PC-3 (cell line): ENCODE measurements at regions of chr19 and their contacts with region 1.

Region 1: GRCh38 chr19:42794765-42795164 is 29.3 kb upstream of the PSG8 start:
- DNase-seq: no peak
- ATAC-seq: no peak
- H3K4me3 ChIP-seq: no peak overlapping the region
- H3K27ac ChIP-seq: no peak overlapping the region
- H3K4me1 ChIP-seq: peaks cover 13% of the 10 kb centered on the region
- H3K27me3 ChIP-seq: no peaks in the 10 kb centered on the region
- CTCF ChIP-seq: no peak

Region 2: DNA sequence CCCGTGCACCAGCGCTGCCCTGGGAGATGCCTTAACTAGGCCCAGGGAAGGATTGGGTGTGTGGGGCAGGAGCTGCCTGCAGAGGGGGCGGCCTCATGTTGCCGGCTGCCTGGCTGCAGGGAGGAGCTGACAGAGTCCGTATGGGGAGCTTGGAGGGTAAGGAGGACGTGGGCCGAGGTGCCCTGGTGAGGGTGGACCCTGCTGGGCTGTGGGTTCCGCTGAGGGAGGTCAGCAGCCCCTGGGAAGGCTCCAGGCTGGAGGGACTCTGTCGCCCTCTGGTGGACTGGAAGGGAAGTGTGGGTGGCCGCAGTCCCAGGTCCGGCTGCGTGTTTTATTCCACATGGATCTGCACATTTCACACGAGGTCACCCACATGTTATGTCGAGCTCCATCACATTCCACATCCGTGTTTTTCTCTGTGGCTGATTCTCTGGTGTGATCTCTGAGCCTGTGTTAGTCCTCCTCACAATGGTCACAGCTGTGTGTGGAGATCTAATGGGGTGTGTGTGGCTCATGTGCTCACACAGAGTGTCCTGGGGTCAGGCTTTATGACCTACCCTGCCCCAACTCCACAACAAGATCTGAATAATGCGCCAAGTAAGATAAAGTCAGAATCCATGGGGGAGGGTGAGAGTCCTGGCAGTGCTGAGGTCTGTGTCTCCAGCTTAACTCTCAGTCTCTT is 198.2 kb before region 1 on chr19:
- CTCF ChIA-PET with region 1: no interaction called
- POLR2A ChIA-PET with region 1: no interaction called
- intact Hi-C with region 1: no loop called
- DNase-seq: peak; percentile 24
- ATAC-seq: peak; percentile 48
- H3K4me3 ChIP-seq: no peak overlapping the region
- H3K27ac ChIP-seq: no peak overlapping the region
- H3K4me1 ChIP-seq: no peaks in the 10 kb centered on the region
- H3K27me3 ChIP-seq: peaks cover under 1% of the 10 kb centered on the region; the same call in 1 of the 2 replicates
- CTCF ChIP-seq: peak; percentile 81

Region 3: DNA sequence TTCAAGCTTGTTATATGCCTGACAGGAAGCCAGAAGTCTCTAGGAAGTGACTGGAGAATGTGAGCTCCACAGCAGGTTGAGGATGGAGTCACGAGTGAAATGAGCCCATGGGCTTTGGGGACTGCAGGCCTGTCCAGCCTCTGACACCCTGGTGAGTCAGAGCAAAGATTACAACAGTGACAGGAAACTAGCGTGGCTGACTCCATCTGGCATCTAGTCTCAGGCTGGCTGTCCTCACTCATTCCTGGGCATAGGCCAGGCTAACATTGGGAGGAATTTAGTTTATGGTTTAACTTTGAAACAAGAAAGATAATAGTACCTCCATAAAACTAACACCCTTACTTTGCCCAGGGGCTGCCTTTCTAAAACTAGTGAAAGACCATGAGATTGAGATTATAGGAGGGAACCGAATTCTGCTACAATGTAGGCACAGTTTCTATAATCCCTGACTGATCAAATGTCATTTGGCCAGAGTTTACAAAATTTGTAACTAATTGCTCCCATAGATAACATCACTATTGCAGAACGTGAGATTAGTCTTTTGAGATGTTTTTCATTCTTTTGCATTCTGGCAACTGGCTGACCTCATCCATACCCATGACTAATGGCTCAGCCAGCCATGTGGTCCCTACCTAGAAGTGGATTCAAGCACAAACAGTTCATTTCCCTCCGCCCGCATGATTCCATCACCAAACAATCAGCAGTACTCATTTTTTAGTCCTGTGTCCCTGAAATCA is 56.4 kb after region 1 on chr19:
- CTCF ChIA-PET with region 1: no interaction called
- POLR2A ChIA-PET with region 1: no interaction called
- intact Hi-C with region 1: loop called (anchors 5 kb)
- DNase-seq: peak; percentile 92
- ATAC-seq: peak; percentile 92
- H3K4me3 ChIP-seq: peak overlapping the region; percentile 35; the same call in 1 of the 2 replicates
- H3K27ac ChIP-seq: peak overlapping the region; percentile 97
- H3K4me1 ChIP-seq: peaks cover 29% of the 10 kb centered on the region
- H3K27me3 ChIP-seq: no peaks in the 10 kb centered on the region
- CTCF ChIP-seq: no peak

Region 4: DNA sequence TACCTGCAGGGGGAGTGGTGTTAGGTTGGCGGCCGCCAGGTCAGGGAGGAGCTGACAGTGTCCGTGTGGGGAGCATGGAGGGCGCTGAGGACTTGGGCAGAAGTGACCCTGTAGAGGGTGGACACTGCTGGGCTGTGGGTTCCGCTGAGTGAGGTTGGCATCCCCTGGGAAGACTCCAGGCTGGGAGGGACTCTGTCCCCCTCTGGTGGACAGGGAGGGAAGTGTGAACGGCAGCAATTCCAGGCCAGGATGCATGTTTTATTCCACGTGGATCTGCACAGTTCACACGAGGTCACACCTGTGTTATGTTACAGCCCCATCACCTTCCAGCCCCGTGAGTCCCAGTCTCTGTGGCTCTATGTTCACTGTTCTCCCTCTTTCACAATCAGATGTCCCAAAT is 86.5 kb after region 1 on chr19:
- CTCF ChIA-PET with region 1: interaction called, 3 read pairs
- POLR2A ChIA-PET with region 1: no interaction called
- intact Hi-C with region 1: loop called (anchors 2 kb)
- DNase-seq: no peak
- ATAC-seq: no peak
- H3K4me3 ChIP-seq: no peak overlapping the region
- H3K27ac ChIP-seq: no peak overlapping the region
- H3K4me1 ChIP-seq: peaks cover 15% of the 10 kb centered on the region; the same call in 1 of the 2 replicates
- H3K27me3 ChIP-seq: no peaks in the 10 kb centered on the region
- CTCF ChIP-seq: 0 out of 2 replicates have a peak, but pooled peaks have one; percentile 25

Region 5: GRCh38 chr19:42919511-42920021 is 124.8 kb after region 1 on chr19:
- CTCF ChIA-PET with region 1: no interaction called
- POLR2A ChIA-PET with region 1: no interaction called
- intact Hi-C with region 1: loop called (anchors 5 kb)
- DNase-seq: no peak
- ATAC-seq: no peak
- H3K4me3 ChIP-seq: no peak overlapping the region
- H3K27ac ChIP-seq: no peak overlapping the region
- H3K4me1 ChIP-seq: no peaks in the 10 kb centered on the region
- H3K27me3 ChIP-seq: no peaks in the 10 kb centered on the region
- CTCF ChIP-seq: peak; percentile 42; the same call in 1 of the 2 replicates